Activated CD8-positive, alpha-beta T cell treated with anti-CD3 and anti-CD28 coated beads for 36 hours (primary cell): ENCODE measurements at regions of chr11 and their contacts with region 1.

Region 1: GRCh38 chr11:124800226-124800929 is at the start of gene MSANTD2:
- DNase-seq: peak; percentile 83
- ATAC-seq: peak; percentile 89
- H3K4me3 Mint-ChIP-seq: peak within 1 kb of the TSS; percentile 87
- H3K27ac Mint-ChIP-seq: peak within 1 kb of the TSS; percentile 92
- H3K4me1 Mint-ChIP-seq: peaks cover 29% of the 10 kb centered on the region
- H3K27me3 Mint-ChIP-seq: no peaks in the 10 kb centered on the region
- CTCF ChIP-seq: no peak
- total RNA-seq, gene MSANTD2: 5.8 to 7.3 TPM

Region 2: GRCh38 chr11:124746621-124747243 is 53.6 kb before region 1 on chr11:
- CTCF ChIA-PET with region 1: interaction called, 11 read pairs
- POLR2A ChIA-PET with region 1: interaction called, 4 read pairs
- intact Hi-C with region 1: no loop called
- DNase-seq: peak; percentile 79
- ATAC-seq: peak; percentile 92
- H3K4me3 Mint-ChIP-seq: peak overlapping the region; percentile 79
- H3K27ac Mint-ChIP-seq: peak overlapping the region; percentile 79
- H3K4me1 Mint-ChIP-seq: peaks cover 4% of the 10 kb centered on the region
- H3K27me3 Mint-ChIP-seq: peaks cover 6% of the 10 kb centered on the region
- CTCF ChIP-seq: no peak

Region 3: GRCh38 chr11:125154378-125155099 is 354.2 kb after region 1 on chr11:
- CTCF ChIA-PET with region 1: no interaction called
- POLR2A ChIA-PET with region 1: no interaction called
- intact Hi-C with region 1: no loop called
- DNase-seq: no peak
- ATAC-seq: peak; percentile 17
- H3K4me3 Mint-ChIP-seq: no peak overlapping the region
- H3K27ac Mint-ChIP-seq: no peak overlapping the region
- H3K4me1 Mint-ChIP-seq: no peaks in the 10 kb centered on the region
- H3K27me3 Mint-ChIP-seq: peaks cover 25% of the 10 kb centered on the region
- CTCF ChIP-seq: no peak